Endothelial cell of umbilical vein (primary cell): ENCODE measurements at regions of chr18 and their contacts with region 1.

Region 1: GRCh38 chr18:44130376-44130942 is 550.2 kb upstream of the SETBP1 start:
- DNase-seq: peak; percentile 69
- H3K4me3 ChIP-seq: no peak overlapping the region
- H3K27ac ChIP-seq: no peak overlapping the region
- H3K4me1 ChIP-seq: peaks cover 11% of the 10 kb centered on the region
- H3K27me3 ChIP-seq: no peaks in the 10 kb centered on the region
- CTCF ChIP-seq: peak; percentile 59 to 66
- POLR2A ChIP-seq: no peak

Region 2: DNA sequence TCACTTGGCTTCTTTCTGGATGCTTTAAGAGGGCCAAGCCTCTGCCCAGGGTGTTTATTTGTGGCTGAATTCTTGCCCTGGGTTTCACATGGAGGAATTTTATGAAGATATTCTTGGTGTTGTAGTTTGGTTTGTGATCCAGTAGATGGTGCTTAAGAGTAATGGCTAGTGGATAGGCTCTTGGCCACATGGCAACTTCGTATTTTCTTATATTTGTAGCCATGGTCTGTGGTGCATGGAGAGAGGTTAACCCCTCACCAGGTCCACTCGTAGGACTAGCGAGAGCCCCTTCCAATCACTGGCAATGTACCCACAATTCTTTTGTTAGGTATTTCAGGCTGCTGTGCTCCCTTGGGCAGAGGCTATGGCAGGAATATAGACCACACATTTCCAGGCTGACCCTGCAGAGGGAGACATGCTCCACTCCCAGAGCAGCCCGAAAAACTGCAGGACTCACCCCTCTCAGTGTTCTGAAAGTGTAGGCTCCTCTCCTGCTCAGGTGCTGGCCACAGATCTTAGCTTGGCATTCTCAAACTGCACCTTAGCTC is 31.8 kb before region 1 on chr18:
- CTCF ChIA-PET with region 1: interaction called, 12 read pairs
- POLR2A ChIA-PET with region 1: no interaction called
- dilution Hi-C with region 1: no loop called
- intact Hi-C with region 1: no loop called
- DNase-seq: peak; percentile 53
- H3K4me3 ChIP-seq: no peak overlapping the region
- H3K27ac ChIP-seq: no peak overlapping the region
- H3K4me1 ChIP-seq: no peaks in the 10 kb centered on the region
- H3K27me3 ChIP-seq: peaks cover 0 to 3% of the 10 kb centered on the region in 2 experiments
- CTCF ChIP-seq: peak; percentile 23 to 33
- POLR2A ChIP-seq: no peak

Region 3: DNA sequence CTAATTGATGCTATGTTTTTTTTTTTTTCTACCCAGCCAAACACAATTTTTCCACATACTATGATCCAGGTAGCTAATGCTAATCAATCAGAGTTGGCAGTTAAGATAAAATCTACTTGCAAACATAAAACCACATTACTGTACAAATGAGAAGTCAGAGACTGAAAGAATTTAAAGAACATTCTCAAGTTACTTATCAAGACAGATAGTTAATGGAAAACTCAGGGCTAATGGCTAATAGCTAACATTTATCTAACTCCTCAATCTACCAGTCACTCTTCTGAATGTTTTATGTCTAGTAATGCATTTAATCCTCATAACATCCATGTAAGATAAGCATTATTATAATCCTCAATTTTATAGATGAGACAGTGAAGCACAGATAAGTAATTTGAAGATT is 12.6 kb after region 1 on chr18:
- CTCF ChIA-PET with region 1: interaction called, 11 read pairs
- POLR2A ChIA-PET with region 1: no interaction called
- dilution Hi-C with region 1: no loop called
- intact Hi-C with region 1: no loop called
- DNase-seq: no peak
- H3K4me3 ChIP-seq: no peak overlapping the region
- H3K27ac ChIP-seq: no peak overlapping the region
- H3K4me1 ChIP-seq: no peaks in the 10 kb centered on the region
- H3K27me3 ChIP-seq: no peaks in the 10 kb centered on the region
- CTCF ChIP-seq: no peak
- POLR2A ChIP-seq: no peak

Region 4: GRCh38 chr18:44325903-44326635 is 195.6 kb after region 1 on chr18:
- CTCF ChIA-PET with region 1: interaction called, 6 read pairs
- POLR2A ChIA-PET with region 1: no interaction called
- dilution Hi-C with region 1: no loop called
- intact Hi-C with region 1: loop called (anchors 1 kb)
- DNase-seq: peak; percentile 72
- H3K4me3 ChIP-seq: no peak overlapping the region
- H3K27ac ChIP-seq: no peak overlapping the region
- H3K4me1 ChIP-seq: no peaks in the 10 kb centered on the region
- H3K27me3 ChIP-seq: no peaks in the 10 kb centered on the region
- CTCF ChIP-seq: peak; percentile 54 to 64
- POLR2A ChIP-seq: no peak

Region 5: GRCh38 chr18:44679056-44679905 is 548.8 kb after region 1 on chr18:
- CTCF ChIA-PET with region 1: no interaction called
- POLR2A ChIA-PET with region 1: no interaction called
- dilution Hi-C with region 1: no loop called
- intact Hi-C with region 1: loop called (anchors 1 kb)
- DNase-seq: peak; percentile 87
- H3K4me3 ChIP-seq: peak overlapping the region; percentile 61 to 94 (median 81)
- H3K27ac ChIP-seq: no peak overlapping the region
- H3K4me1 ChIP-seq: no peaks in the 10 kb centered on the region
- H3K27me3 ChIP-seq: peaks cover 28 to 36% of the 10 kb centered on the region in 2 experiments
- CTCF ChIP-seq: peak; percentile 34 to 63
- POLR2A ChIP-seq: no peak

Region 6: DNA sequence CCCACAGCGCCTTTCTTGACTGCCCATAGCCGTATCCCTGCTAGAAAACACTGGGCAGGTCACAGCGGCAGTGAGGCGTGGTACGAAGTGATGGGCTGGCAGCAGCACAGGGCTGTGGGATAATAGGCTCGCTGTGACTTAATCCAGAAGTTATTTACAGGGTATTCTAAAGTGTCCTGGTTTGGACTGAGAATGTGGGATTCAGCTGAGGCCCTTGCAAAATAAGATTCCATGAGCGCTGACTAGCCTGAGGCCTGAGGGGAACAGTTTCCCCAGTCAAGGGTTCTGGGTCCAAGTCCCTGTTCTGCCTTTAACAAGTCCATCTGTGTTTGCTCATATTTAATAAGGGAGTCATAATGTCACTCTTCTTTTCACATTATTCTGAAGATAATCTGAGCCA is 584.8 kb after region 1 on chr18:
- CTCF ChIA-PET with region 1: no interaction called
- POLR2A ChIA-PET with region 1: no interaction called
- dilution Hi-C with region 1: no loop called
- intact Hi-C with region 1: no loop called
- DNase-seq: no peak
- H3K4me3 ChIP-seq: no peak overlapping the region
- H3K27ac ChIP-seq: no peak overlapping the region
- H3K4me1 ChIP-seq: no peaks in the 10 kb centered on the region
- H3K27me3 ChIP-seq: no peaks in the 10 kb centered on the region
- CTCF ChIP-seq: no peak
- POLR2A ChIP-seq: no peak

Region 7: GRCh38 chr18:44895176-44895798 is 764.8 kb after region 1 on chr18:
- CTCF ChIA-PET with region 1: no interaction called
- POLR2A ChIA-PET with region 1: no interaction called
- dilution Hi-C with region 1: no loop called
- intact Hi-C with region 1: loop called (anchors 1 kb)
- DNase-seq: peak; percentile 49
- H3K4me3 ChIP-seq: no peak overlapping the region
- H3K27ac ChIP-seq: no peak overlapping the region
- H3K4me1 ChIP-seq: no peaks in the 10 kb centered on the region
- H3K27me3 ChIP-seq: no peaks in the 10 kb centered on the region
- CTCF ChIP-seq: peak in 1 of 2 donors; percentile 12
- POLR2A ChIP-seq: no peak